ENCODE measurements at regions of chr12 and their contacts with region 1.

Region 1: GRCh38 chr12:63912651-63913050 is 68.2 kb downstream of the SRGAP1 start:
- DNase-seq: no peak
- H3K4me3 Mint-ChIP-seq: no peak overlapping the region
- H3K27ac Mint-ChIP-seq: no peak overlapping the region
- H3K4me1 Mint-ChIP-seq: peaks cover 52% of the 10 kb centered on the region
- H3K27me3 Mint-ChIP-seq: no peaks in the 10 kb centered on the region
- CTCF ChIP-seq: no peak

Region 2: GRCh38 chr12:63313139-63313538 is 599.5 kb before region 1 on chr12:
- CTCF ChIA-PET with region 1: no interaction called
- intact Hi-C with region 1: no loop called
- DNase-seq: no peak
- H3K4me3 Mint-ChIP-seq: no peak overlapping the region
- H3K27ac Mint-ChIP-seq: no peak overlapping the region
- H3K4me1 Mint-ChIP-seq: no peaks in the 10 kb centered on the region
- H3K27me3 Mint-ChIP-seq: no peaks in the 10 kb centered on the region
- CTCF ChIP-seq: no peak

Region 3: GRCh38 chr12:63989301-63989845 is 76.7 kb after region 1 on chr12:
- CTCF ChIA-PET with region 1: no interaction called
- intact Hi-C with region 1: no loop called
- DNase-seq: no peak
- H3K4me3 Mint-ChIP-seq: no peak overlapping the region
- H3K27ac Mint-ChIP-seq: no peak overlapping the region
- H3K4me1 Mint-ChIP-seq: peaks cover 7% of the 10 kb centered on the region
- H3K27me3 Mint-ChIP-seq: no peaks in the 10 kb centered on the region
- CTCF ChIP-seq: no peak

Region 4: GRCh38 chr12:64001439-64001838 is 88.8 kb after region 1 on chr12:
- CTCF ChIA-PET with region 1: no interaction called
- intact Hi-C with region 1: no loop called
- DNase-seq: no peak
- H3K4me3 Mint-ChIP-seq: no peak overlapping the region
- H3K27ac Mint-ChIP-seq: no peak overlapping the region
- H3K4me1 Mint-ChIP-seq: no peaks in the 10 kb centered on the region
- H3K27me3 Mint-ChIP-seq: no peaks in the 10 kb centered on the region
- CTCF ChIP-seq: no peak

Region 5: DNA sequence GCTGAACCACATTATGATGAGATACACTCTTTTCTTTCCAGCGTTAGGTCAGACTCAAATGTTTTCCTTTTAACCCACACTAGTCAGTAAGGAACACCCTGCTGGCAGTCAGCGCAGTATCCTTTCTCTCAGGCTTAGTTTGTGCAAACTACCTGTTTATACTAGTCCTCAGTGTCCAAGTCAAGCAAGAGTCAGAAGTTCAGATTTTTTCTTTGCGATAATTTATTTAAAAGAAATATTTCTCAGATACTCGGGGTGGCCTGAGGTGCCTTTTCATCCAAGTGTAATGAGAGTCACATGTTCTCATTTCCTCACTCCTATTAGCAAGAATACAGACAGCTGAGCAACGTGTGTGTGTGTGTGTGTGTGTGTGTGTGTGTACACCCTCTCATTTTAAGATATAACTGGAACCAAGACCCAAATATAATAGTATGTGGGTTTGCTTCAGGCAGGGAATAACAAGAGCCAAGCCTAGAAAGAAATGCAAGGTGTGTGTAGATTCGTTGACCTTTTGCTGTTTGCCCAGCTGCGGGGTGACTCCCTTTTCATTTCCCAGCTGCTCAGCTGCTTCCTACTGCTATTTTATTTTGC is 126.7 kb after region 1 on chr12:
- CTCF ChIA-PET with region 1: interaction called, 10 read pairs
- intact Hi-C with region 1: no loop called
- DNase-seq: peak; percentile 5
- H3K4me3 Mint-ChIP-seq: no peak overlapping the region
- H3K27ac Mint-ChIP-seq: peak overlapping the region; percentile 57
- H3K4me1 Mint-ChIP-seq: peaks cover 7% of the 10 kb centered on the region
- H3K27me3 Mint-ChIP-seq: no peaks in the 10 kb centered on the region
- CTCF ChIP-seq: no peak

Measured in Calu3 (cell line).